A673 (cell line): ENCODE measurements at regions of chr1 and their contacts with region 1.

Region 1: DNA sequence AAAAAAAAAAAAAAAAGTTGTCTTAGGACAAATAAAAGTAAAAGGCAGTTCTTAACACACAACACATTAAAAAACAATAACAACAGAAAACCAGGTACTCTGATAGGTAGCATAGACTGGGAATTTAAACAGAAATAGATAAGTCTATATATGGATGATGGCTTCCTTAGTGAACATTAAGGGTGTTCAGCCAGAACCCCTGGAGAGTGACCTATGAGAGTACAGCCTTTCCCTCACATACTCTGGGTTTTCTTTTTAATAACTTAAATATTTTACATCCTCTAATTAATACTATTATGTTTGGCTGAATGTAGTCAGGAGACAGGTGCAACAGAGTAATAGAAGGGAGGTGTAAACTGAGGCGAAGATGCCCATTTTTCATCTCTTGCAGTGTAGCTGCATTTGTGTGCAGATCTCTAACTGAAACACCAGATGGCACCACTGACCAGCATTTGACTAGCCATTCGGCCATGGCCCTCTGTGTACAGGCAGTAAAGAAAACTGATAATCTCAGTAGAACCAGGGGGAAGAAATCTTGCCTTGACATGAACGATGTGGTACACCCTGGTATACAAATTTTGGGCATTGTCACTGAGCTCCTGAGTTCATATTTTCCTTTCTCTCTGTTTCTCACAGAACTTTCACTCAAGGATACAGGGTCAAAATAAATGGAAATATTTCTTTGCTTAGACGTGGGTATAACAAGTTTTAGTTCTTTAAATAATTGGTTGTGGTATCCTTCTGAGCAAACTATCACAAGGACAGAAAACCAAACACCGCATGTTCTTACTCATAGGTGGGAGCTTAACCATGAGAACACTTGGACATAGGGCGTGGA is 7.6 kb downstream of the TTF2 start:
- DNase-seq: peak; percentile 60
- H3K4me3 ChIP-seq: no peak overlapping the region
- H3K27ac ChIP-seq: no peak overlapping the region
- H3K4me1 ChIP-seq: no peaks in the 10 kb centered on the region
- H3K27me3 ChIP-seq: no peaks in the 10 kb centered on the region
- CTCF ChIP-seq: peak; percentile 74

Region 2: DNA sequence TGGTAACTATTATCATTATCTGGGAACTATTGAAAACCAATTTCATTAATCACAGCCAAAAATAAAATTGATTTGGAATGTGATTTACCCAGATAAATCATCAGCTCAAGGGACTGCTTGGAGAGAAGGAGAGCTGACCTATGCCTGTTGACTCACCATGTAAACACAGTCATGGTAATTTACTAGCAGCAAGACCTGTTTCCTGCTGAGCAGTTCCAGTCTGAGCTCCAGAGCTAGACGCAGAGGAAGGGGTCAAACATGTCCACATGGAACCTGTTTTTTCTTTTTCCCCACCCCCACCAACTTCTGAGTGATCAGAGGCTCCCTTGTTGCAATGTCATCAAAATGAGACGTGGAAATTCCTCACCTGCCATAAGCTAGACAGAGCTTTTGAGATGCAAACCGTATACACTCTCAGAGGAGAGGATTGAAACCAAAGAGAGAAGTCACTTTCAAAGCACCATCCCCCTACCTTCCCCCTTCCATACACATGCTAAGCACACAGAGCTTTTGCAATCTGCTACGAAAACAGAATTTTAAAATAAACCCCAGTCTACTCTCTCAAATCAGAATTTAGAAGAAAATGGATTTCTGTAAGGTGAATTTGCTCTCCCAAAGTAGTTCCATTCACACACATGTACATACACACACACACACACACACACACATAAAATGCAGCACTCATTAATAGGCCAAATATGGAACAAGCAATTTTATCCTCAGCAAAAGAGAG is 213.9 kb before region 1 on chr1:
- CTCF ChIA-PET with region 1: interaction called, 12 read pairs
- POLR2A ChIA-PET with region 1: no interaction called
- intact Hi-C with region 1: no loop called
- DNase-seq: peak; percentile 24
- H3K4me3 ChIP-seq: no peak overlapping the region
- H3K27ac ChIP-seq: no peak overlapping the region
- H3K4me1 ChIP-seq: peaks cover 38% of the 10 kb centered on the region
- H3K27me3 ChIP-seq: no peaks in the 10 kb centered on the region
- CTCF ChIP-seq: no peak

Region 3: DNA sequence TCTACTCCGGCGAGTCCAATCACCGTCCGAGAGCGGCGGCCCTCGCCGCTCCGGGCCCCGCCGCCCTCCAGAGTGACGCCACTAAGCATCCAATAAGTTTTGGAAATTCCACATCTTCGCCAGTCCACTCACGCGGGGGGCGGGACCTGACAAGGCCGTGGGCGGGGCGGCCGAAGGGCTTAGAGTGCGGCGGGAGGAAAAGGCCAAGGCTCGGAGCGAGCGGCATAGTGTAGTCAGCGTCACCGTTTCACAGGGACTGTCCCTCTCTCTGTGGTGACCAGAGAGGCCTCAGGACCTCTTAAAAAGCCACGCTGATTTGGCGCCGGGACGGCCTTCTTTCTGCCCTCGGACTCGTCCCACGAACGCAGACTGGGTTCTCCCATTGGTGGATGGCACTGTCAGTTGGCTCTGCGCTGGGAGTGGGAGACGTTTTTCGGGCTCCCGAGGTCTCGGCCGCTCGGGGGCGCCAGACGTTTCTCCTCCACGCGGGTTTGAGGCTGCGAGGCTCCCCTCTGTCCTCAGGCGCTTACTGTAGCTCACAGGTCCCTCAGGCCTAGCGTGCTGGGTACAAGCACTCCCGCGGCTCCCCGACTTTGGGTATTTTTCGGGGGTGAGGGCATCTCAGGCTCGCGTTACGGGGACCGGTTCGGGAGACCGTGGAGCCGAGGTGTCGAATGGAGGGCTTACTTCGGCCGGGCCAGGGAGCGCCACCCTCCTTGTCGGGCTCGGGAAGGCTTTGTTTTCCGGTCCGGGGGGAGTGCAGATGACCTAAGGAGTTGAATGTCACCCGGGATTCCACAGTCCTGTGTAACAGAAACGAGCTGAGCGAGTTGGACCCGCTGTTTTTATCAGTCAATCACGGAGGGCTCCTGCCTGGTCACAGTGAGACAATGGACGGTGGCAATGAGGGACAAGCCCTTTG is 54.3 kb after region 1 on chr1:
- CTCF ChIA-PET with region 1: no interaction called
- POLR2A ChIA-PET with region 1: no interaction called
- intact Hi-C with region 1: loop called (anchors 5 kb)
- DNase-seq: peak; percentile 96
- H3K4me3 ChIP-seq: peak overlapping the region; percentile 59
- H3K27ac ChIP-seq: peak overlapping the region; percentile 82
- H3K4me1 ChIP-seq: no peaks in the 10 kb centered on the region
- H3K27me3 ChIP-seq: peaks cover 8% of the 10 kb centered on the region
- CTCF ChIP-seq: peak; percentile 92

Region 4: GRCh38 chr1:117128323-117129079 is 60.7 kb after region 1 on chr1:
- CTCF ChIA-PET with region 1: interaction called, 11 read pairs
- POLR2A ChIA-PET with region 1: no interaction called
- intact Hi-C with region 1: loop called (anchors 5 kb)
- DNase-seq: peak; percentile 61
- H3K4me3 ChIP-seq: no peak overlapping the region
- H3K27ac ChIP-seq: no peak overlapping the region
- H3K4me1 ChIP-seq: no peaks in the 10 kb centered on the region
- H3K27me3 ChIP-seq: peaks cover 8% of the 10 kb centered on the region
- CTCF ChIP-seq: peak; percentile 68

Region 5: GRCh38 chr1:117284399-117285215 is 216.9 kb after region 1 on chr1:
- CTCF ChIA-PET with region 1: interaction called, 16 read pairs
- POLR2A ChIA-PET with region 1: no interaction called
- intact Hi-C with region 1: loop called (anchors 2 kb)
- DNase-seq: peak; percentile 80
- H3K4me3 ChIP-seq: no peak overlapping the region
- H3K27ac ChIP-seq: no peak overlapping the region
- H3K4me1 ChIP-seq: no peaks in the 10 kb centered on the region
- H3K27me3 ChIP-seq: no peaks in the 10 kb centered on the region
- CTCF ChIP-seq: peak; percentile 67